ENCODE measurements at regions of chr1 and their contacts with region 1.

Region 1: GRCh38 chr1:113042285-113043143 is 30.5 kb upstream of the LRIG2 start:
- DNase-seq: peak; percentile 49
- H3K4me3 Mint-ChIP-seq: no peak overlapping the region
- H3K27ac Mint-ChIP-seq: no peak overlapping the region
- H3K4me1 Mint-ChIP-seq: peaks cover 48% of the 10 kb centered on the region
- H3K27me3 Mint-ChIP-seq: no peaks in the 10 kb centered on the region

Region 2: DNA sequence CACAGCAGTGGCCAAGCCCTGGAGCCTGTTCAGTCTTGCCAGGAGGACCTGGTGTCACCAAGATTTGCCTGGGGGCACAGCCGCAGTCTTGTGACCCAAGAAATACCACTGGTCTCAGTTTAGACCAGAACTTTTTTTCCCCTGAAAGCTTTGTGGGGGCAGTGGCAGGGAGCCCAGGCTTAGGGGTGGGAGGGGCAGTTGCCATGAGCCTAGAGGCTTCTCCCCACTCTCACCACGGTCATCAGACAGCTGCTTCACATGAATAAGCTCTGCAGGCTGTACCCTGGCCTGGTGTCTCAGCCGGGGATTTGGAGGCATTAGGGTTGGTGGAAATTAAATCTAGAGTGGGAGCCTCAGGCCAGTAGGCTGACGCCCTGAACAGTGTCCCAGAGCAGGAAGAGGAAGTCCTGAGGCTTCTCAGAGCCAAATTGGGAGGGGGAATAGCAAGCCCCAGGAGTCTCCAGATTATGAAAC is 160.2 kb before region 1 on chr1:
- CTCF ChIA-PET with region 1: interaction called, 10 read pairs
- POLR2A ChIA-PET with region 1: interaction called, 3 read pairs
- DNase-seq: no peak
- H3K4me3 Mint-ChIP-seq: no peak overlapping the region
- H3K27ac Mint-ChIP-seq: no peak overlapping the region
- H3K4me1 Mint-ChIP-seq: peaks cover 3% of the 10 kb centered on the region
- H3K27me3 Mint-ChIP-seq: peaks cover 16% of the 10 kb centered on the region

Region 3: GRCh38 chr1:112982853-112983536 is 59.5 kb before region 1 on chr1:
- CTCF ChIA-PET with region 1: no interaction called
- POLR2A ChIA-PET with region 1: no interaction called
- DNase-seq: no peak
- H3K4me3 Mint-ChIP-seq: no peak overlapping the region
- H3K27ac Mint-ChIP-seq: no peak overlapping the region
- H3K4me1 Mint-ChIP-seq: no peaks in the 10 kb centered on the region
- H3K27me3 Mint-ChIP-seq: no peaks in the 10 kb centered on the region

Region 4: GRCh38 chr1:113353581-113353980 is 311.1 kb after region 1 on chr1:
- CTCF ChIA-PET with region 1: no interaction called
- POLR2A ChIA-PET with region 1: no interaction called
- DNase-seq: no peak
- H3K4me3 Mint-ChIP-seq: no peak overlapping the region
- H3K27ac Mint-ChIP-seq: no peak overlapping the region
- H3K4me1 Mint-ChIP-seq: no peaks in the 10 kb centered on the region
- H3K27me3 Mint-ChIP-seq: peaks cover 14% of the 10 kb centered on the region